Activated B cell treated with CpG ODN at 0.5 μM for 24 hours (primary cell): ENCODE measurements at regions of chr16 and their contacts with region 1.

Region 1: DNA sequence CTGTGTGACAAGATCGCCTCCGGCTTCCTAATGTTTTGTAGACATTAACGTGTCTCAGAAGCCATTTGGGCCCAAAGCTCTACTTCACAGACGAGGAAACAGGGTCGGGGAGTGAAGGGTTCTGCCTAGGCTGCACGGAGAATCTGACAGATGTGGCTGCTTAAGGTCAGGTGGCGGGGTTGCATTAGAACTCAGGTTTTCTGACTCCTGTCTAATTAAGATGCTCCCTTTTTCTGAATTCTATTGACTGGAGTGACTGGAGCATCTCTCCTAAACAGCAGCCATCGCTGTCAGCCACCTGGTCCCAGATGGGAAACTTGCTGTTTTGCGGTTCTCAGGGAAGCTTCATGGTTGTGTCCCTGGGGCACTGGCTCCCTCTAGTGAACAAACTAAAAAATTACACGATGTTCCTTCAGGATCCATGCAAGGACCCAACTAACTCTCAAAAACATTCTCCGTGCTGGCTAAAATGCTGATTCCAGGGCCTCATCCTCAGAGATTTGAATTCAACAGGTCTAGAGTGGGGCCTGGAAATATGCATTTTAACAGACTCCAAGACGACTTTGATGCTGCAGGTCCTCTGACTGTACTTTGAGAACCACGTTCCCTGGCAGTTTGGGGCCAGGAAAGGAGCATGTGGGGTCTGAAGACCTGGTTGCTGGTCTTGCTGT is 117.4 kb downstream of the IRF8 start:
- DNase-seq: peak; percentile 32
- ATAC-seq: peak; percentile 60
- H3K4me3 Mint-ChIP-seq: no peak overlapping the region
- H3K27ac Mint-ChIP-seq: no peak overlapping the region
- H3K4me1 Mint-ChIP-seq: peaks cover 36% of the 10 kb centered on the region
- H3K27me3 Mint-ChIP-seq: peaks cover 6% of the 10 kb centered on the region
- CTCF ChIP-seq: no peak

Region 2: DNA sequence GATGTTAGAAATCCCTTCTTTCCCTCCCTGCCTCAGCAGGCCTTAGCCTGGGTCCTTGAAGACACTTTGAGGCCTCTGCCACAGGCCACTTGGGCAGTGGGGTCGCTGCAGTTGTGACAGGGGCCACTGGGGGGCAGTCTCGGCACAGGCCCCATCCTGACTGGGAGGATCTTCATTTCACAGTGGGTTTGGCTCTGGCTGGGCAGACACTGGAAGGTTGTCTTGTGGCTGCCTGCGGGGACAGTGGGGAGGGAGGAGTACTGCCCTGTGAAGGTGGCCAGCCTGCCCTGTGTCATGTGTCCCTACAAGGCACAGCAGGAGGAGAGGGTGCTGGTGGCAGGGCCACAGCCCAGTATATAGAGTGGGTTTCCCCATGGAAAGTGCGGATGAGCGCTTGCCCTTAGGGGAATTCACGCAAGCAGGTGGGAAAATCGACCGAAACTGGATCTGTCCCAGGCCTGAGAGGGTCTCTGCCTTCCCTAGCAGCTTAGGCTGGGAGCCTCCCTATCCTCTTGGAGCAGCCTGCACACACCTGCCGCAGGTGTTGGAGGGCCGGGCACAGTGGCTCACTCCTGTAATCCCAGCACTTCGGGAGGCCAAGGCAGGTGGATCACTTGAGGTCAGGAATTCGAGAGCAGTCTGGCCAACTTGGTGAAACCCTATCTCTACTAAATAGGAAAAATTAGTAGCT is 356.4 kb before region 1 on chr16:
- CTCF ChIA-PET with region 1: no interaction called
- POLR2A ChIA-PET with region 1: no interaction called
- intact Hi-C with region 1: loop called (anchors 1 kb)
- DNase-seq: peak; percentile 70
- ATAC-seq: peak; percentile 97
- H3K4me3 Mint-ChIP-seq: no peak overlapping the region
- H3K27ac Mint-ChIP-seq: peak overlapping the region; percentile 67
- H3K4me1 Mint-ChIP-seq: no peaks in the 10 kb centered on the region
- H3K27me3 Mint-ChIP-seq: no peaks in the 10 kb centered on the region
- CTCF ChIP-seq: no peak

Region 3: DNA sequence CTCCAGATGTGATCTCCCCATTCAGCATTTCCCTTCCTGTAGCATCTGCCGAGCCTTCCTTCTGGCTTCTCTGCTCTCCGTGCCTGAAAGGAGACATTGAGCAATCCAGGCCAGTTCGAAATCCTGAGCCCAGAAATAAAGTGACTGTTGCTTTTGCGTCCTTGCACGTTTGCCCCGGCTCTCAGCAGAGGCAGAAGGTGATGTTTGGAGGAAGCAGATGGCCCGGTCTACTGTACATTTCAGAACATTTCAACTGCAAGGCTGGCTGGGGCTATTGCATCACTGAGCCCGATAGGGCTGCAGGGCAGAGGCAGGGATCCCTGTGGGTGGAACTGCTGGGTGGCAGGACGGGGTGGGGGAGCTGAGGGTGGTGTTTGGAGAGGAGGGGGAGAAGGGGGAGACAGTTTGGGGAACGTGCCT is 87.9 kb before region 1 on chr16:
- CTCF ChIA-PET with region 1: interaction called, 4 read pairs
- POLR2A ChIA-PET with region 1: interaction called, 6 read pairs
- intact Hi-C with region 1: loop called (anchors 1 kb)
- DNase-seq: no peak
- ATAC-seq: peak; percentile 29
- H3K4me3 Mint-ChIP-seq: peak overlapping the region; percentile 68
- H3K27ac Mint-ChIP-seq: peak overlapping the region; percentile 80
- H3K4me1 Mint-ChIP-seq: peaks cover 86% of the 10 kb centered on the region
- H3K27me3 Mint-ChIP-seq: no peaks in the 10 kb centered on the region
- CTCF ChIP-seq: no peak

Region 4: GRCh38 chr16:85995541-85996423 is 20.6 kb before region 1 on chr16:
- CTCF ChIA-PET with region 1: interaction called, 32 read pairs
- POLR2A ChIA-PET with region 1: interaction called, 10 read pairs
- intact Hi-C with region 1: loop called (anchors 1 kb)
- DNase-seq: peak; percentile 27
- ATAC-seq: peak; percentile 29
- H3K4me3 Mint-ChIP-seq: peak overlapping the region; percentile 78
- H3K27ac Mint-ChIP-seq: peak overlapping the region; percentile 84
- H3K4me1 Mint-ChIP-seq: peaks cover 89% of the 10 kb centered on the region
- H3K27me3 Mint-ChIP-seq: no peaks in the 10 kb centered on the region
- CTCF ChIP-seq: no peak

Region 5: DNA sequence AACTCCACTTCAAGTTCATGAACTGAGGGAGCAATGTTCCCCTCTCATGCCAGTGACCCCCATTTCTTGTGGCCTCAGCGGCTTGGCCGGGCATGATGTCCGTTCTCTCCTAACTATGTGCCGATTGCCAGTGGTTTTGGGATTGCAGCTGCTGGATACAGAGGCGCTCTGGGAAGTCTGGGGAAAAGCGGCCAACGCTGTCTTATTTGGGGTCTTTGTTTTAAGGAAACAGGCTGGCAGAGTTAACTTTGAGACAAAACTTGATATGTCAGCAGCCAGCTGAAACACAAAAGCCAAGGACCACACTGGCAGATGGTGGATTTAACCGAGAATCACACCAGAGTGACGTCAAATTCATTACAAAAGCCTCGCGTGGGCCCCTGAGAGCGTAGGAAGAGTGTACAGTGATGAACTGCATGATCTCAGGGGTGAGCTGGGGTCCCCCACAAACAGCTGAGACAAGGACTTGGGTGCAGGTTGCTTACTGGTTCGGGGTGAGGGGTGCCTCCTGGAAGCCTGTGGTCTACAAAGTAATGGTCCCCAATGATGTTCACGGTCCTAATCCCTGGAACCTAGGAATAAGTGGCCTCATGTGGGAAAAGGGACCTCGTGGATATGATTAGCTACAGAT is 63.0 kb after region 1 on chr16:
- CTCF ChIA-PET with region 1: no interaction called
- POLR2A ChIA-PET with region 1: no interaction called
- intact Hi-C with region 1: no loop called
- DNase-seq: peak; percentile 1
- ATAC-seq: no peak
- H3K4me3 Mint-ChIP-seq: no peak overlapping the region
- H3K27ac Mint-ChIP-seq: no peak overlapping the region
- H3K4me1 Mint-ChIP-seq: no peaks in the 10 kb centered on the region
- H3K27me3 Mint-ChIP-seq: peaks cover 21% of the 10 kb centered on the region
- CTCF ChIP-seq: no peak

Region 6: DNA sequence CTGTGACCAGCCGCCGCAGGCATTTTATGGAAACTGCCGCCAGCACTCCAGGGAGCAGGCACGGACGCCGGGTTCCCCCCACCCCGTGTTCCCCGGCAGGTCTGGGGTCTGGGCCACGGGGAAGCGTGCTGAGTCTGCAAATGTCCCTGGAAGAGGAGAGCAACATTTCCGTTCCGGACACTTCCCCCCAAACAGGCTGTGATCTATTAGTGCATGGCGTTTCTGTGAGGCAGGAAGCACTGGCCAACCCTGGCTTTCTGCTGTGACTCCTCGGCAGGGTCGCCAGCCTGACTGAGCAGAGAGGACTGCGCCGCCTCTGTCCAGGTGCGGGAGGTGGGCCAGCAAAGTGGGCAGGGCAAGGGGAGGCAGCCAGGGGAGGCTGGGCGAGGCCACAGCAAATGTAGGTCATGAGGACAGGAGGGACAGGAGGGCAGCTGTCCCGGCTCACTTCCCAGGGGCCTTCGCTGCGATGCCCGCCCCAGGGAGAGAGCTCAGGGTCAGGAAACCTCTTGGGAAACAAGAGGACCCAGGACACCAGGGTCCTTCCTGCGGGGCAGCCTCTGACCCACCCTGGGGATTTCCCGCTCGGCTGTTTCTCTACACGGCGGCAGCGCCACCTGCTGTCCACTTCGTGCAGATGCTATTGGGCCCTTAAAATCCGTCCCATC is 503.4 kb after region 1 on chr16:
- CTCF ChIA-PET with region 1: no interaction called
- POLR2A ChIA-PET with region 1: no interaction called
- intact Hi-C with region 1: loop called (anchors 2 kb)
- DNase-seq: peak; percentile 43
- ATAC-seq: peak; percentile 60
- H3K4me3 Mint-ChIP-seq: no peak overlapping the region
- H3K27ac Mint-ChIP-seq: no peak overlapping the region
- H3K4me1 Mint-ChIP-seq: peaks cover 5% of the 10 kb centered on the region
- H3K27me3 Mint-ChIP-seq: peaks cover 56% of the 10 kb centered on the region
- CTCF ChIP-seq: peak; percentile 92